Psoas muscle (tissue), 8 donors: ENCODE measurements at regions of chr15 and their contacts with region 1.

Region 1: GRCh38 chr15:99565299-99566156 is at the start of gene MEF2A:
- DNase-seq: peak; percentile 96 to 98
- ATAC-seq: peak; percentile 86 to 88 (median 87)
- H3K4me3 ChIP-seq: peak within 1 kb of the TSS; percentile 75
- H3K27ac ChIP-seq: peak within 1 kb of the TSS; percentile 93
- H3K4me1 ChIP-seq: peaks cover 39% of the 10 kb centered on the region
- H3K27me3 ChIP-seq: no peaks in the 10 kb centered on the region
- CTCF ChIP-seq: no peak
- total RNA-seq, gene MEF2A: 63.9 to 92.6 (median 70.3) TPM

Region 2: GRCh38 chr15:99282121-99282520 is 283.4 kb before region 1 on chr15:
- intact Hi-C with region 1: loop called in 1 of 2 experiments (anchors 10 kb)
- DNase-seq: no peak
- ATAC-seq: no peak
- H3K4me3 ChIP-seq: no peak overlapping the region
- H3K27ac ChIP-seq: no peak overlapping the region
- H3K4me1 ChIP-seq: peaks cover 18% of the 10 kb centered on the region
- H3K27me3 ChIP-seq: no peaks in the 10 kb centered on the region
- CTCF ChIP-seq: no peak

Region 3: DNA sequence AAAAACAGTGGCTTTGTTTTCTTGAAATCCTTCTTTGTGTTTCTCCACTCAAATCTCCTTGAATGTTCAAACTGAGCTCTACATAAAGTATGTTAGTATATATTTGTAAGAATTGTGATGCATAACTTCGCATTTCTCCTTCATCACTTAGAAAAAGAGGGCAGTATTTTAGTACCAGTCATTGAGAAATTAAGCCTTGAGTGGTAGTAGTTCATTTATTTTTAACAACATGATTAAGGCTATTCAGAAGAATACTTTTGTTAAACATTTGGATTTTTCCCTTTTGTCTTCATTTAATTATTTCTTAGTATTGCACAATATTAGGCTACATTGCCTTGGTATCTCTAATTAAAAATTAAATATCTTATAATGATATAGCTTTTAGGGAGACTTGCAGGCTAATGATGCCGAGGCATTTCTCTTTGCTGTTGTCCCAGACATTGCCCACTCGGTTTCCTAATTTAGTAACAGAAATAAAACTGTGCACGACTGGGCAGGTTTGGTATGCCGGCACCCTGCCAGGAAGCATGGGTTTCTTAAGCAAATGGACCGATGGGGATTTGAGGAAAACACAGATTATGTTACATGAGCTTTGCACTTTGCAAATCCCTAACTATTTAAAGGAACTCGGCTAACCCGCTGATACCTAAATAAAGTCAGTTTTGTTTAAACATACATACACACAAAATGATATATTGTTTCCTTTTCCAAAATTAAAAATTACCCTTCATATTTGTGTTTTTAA is 259.6 kb before region 1 on chr15:
- intact Hi-C with region 1: loop called in 1 of 2 experiments (anchors 10 kb)
- DNase-seq: peak; percentile 81 to 93
- ATAC-seq: peak; percentile 85 to 93 (median 88)
- H3K4me3 ChIP-seq: peak overlapping the region; percentile 50
- H3K27ac ChIP-seq: peak overlapping the region; percentile 88
- H3K4me1 ChIP-seq: peaks cover 21% of the 10 kb centered on the region
- H3K27me3 ChIP-seq: no peaks in the 10 kb centered on the region
- CTCF ChIP-seq: no peak

Region 4: DNA sequence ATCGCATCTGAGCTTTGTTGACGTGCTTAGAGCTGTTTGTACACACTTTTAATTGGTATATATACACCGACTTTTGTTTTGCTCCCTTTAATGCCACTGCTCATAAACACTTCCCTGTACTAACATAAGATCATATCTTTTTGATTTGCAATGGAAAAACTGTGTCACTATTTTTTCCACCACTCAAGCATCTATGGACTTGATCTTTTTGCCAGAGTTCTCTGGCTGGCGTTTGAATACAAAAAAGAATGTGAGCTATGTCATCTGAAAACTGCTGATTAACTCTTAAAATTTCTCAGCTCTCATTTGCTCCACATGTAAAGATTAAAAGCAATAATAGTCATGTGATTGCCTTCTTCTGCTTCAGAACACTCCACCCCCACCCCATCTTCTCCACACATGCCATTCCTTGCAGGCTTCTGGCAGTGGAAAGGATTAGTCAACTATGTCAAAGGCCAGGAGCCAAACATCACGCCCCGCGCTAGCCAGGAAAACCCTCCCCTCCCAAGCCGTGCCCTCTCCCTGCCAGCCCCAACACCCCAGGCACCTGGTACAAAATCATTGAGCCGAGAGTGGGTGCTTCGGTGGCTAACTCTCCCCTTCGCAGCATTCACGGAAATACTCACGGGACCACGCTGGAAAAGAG is 123.2 kb before region 1 on chr15:
- intact Hi-C with region 1: loop called (anchors 5 to 10 kb)
- DNase-seq: peak in 1 of 2 donors; percentile 83
- ATAC-seq: peak; percentile 62 to 83 (median 72)
- H3K4me3 ChIP-seq: peak overlapping the region; percentile 33
- H3K27ac ChIP-seq: peak overlapping the region; percentile 72
- H3K4me1 ChIP-seq: peaks cover 44% of the 10 kb centered on the region
- H3K27me3 ChIP-seq: peaks cover 0 to 2% (median 0%) of the 10 kb centered on the region in 3 donors
- CTCF ChIP-seq: no peak

Region 5: DNA sequence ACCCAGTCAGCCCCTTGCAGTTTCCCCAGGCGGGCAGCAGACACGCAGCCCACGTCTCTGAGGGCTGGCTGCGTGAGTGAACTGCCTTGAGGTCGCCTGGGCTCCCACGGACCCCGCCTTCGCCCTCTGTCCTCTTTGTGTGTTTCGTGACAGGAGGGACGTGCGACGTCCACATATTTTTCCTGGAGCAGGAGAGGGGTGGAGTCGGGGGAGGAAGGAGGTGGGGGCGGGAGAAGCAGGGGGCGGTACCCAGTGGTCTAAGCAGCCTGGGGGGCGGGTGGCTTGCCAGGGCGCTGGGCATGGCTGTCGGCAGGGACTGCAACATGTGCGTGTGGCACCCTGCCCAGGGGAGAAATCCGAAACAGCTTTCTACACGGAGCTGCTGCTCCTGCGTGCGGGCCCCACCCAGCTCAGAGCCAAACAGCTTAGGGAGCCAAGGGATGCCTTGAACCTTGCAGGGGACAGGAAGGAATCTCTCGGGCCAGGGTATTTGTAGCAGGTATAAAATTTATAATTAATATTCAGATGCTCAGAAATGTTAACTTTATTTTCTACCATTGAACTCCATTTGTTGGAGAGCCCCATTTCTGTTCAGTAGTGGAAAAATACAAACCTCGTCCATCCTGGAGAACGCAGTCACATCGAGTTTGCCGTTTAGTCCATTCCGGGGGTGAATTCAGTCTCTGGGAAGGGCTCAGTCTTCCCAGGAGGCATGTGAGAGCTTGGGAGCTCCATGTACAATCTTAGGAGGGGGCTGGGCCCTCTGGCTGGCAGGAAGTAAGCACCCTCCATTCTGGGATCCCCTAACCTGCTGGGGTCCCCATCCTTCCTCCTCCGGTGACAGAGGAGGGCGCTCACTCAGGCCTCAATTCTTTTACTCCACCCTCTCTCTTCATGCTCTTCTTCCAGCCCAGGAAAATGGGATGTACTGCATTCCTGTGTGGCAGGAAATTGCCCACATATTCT is 78.9 kb before region 1 on chr15:
- intact Hi-C with region 1: no loop called
- DNase-seq: peak; percentile 88 to 92
- ATAC-seq: peak; percentile 92 to 97 (median 95)
- H3K4me3 ChIP-seq: peak overlapping the region; percentile 50
- H3K27ac ChIP-seq: peak overlapping the region; percentile 81
- H3K4me1 ChIP-seq: peaks cover 11% of the 10 kb centered on the region
- H3K27me3 ChIP-seq: no peaks in the 10 kb centered on the region
- CTCF ChIP-seq: no peak

Region 6: GRCh38 chr15:99507504-99508310 is 57.8 kb before region 1 on chr15:
- intact Hi-C with region 1: loop called (anchors 2 to 5 kb)
- DNase-seq: peak; percentile 82 to 92
- ATAC-seq: peak; percentile 84 to 89 (median 85)
- H3K4me3 ChIP-seq: peak overlapping the region; percentile 41
- H3K27ac ChIP-seq: peak overlapping the region; percentile 94
- H3K4me1 ChIP-seq: peaks cover 71% of the 10 kb centered on the region
- H3K27me3 ChIP-seq: no peaks in the 10 kb centered on the region
- CTCF ChIP-seq: no peak

Region 7: DNA sequence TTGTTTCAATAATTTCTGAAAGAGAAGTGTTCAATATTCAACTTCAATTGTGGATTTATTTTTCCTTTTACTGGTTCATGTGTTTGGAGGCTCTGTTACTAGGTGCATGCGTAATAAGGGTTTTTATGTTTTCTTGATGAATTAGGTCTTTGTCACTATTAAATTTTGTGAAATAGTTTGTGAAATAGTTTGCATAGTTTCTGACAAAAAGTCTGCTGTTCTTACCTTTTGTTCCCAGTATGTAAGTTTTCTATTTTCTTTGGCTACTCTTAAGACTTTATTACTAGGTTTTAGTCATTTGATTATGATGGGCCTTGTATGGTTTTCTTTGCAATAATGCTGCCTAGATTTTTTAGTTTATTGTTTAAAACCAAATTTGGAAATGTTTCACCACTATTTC is 38.3 kb after region 1 on chr15:
- intact Hi-C with region 1: no loop called
- DNase-seq: no peak
- ATAC-seq: no peak
- H3K4me3 ChIP-seq: no peak overlapping the region
- H3K27ac ChIP-seq: no peak overlapping the region
- H3K4me1 ChIP-seq: peaks cover 33% of the 10 kb centered on the region
- H3K27me3 ChIP-seq: no peaks in the 10 kb centered on the region
- CTCF ChIP-seq: no peak

Region 8: DNA sequence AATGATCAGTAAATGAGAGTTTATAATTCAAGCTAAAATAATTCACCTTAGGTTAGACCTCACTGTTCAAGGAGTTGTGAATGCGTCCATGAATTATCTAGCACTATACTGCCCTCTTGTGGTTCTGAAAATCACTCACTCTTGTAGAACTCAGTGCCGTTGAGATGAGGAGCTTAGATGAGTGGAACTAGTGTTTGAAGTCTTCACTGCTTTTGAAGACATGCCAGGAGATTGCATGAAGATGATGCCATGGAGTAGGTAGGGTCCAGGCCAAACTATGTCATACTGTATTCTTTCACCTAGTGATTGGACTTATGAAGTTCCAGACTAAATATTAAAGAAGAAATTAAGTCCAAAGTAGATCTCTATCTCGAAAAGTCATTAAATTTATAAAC is 138.9 kb after region 1 on chr15:
- intact Hi-C with region 1: loop called in 1 of 2 experiments (anchors 5 kb)
- DNase-seq: no peak
- ATAC-seq: peak; percentile 71 to 82 (median 76)
- H3K4me3 ChIP-seq: no peak overlapping the region
- H3K27ac ChIP-seq: peak overlapping the region; percentile 90
- H3K4me1 ChIP-seq: peaks cover 49% of the 10 kb centered on the region
- H3K27me3 ChIP-seq: no peaks in the 10 kb centered on the region
- CTCF ChIP-seq: peak; percentile 85

Region 9: DNA sequence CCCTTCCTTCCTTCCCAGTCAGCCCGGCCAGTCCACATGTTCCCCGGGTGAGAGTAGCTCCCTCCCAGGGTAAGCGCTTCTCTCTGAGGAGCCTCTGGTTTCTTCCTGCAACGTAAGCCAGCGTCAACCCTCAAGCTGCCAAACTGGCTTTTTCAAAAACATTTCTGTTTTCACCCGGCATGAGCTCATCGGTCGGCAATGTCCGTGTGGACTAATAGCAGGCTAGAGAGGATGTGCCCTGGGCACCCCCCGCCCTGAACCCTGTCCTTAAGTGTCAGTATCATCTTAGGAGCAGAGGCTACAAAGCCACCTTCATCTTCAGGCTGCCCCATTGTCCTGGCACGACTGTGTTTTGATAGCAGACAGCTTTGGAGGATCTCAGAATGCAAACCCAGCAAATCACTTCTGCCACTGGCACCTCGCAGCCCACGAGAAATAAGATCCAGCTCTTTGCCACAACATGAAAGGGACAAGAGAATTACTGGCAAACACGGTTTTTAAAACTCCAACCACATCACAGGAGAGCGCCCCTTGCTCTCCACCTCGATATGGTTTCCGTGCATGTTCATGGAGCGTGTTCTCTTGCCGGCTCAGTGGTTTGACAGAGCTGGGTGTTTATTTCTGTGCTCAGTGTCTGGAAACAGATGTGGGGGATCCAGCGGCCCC is 1324.0 kb after region 1 on chr15:
- intact Hi-C with region 1: no loop called
- DNase-seq: peak; percentile 71 to 78
- ATAC-seq: peak in 3 of 4 donors; percentile 41 to 61 (median 61)
- H3K4me3 ChIP-seq: no peak overlapping the region
- H3K27ac ChIP-seq: no peak overlapping the region
- H3K4me1 ChIP-seq: no peaks in the 10 kb centered on the region
- H3K27me3 ChIP-seq: peaks cover 0 to 2% (median 0%) of the 10 kb centered on the region in 3 donors
- CTCF ChIP-seq: no peak